ENCODE measurements at regions of chrX and their contacts with region 1.

Region 1: DNA sequence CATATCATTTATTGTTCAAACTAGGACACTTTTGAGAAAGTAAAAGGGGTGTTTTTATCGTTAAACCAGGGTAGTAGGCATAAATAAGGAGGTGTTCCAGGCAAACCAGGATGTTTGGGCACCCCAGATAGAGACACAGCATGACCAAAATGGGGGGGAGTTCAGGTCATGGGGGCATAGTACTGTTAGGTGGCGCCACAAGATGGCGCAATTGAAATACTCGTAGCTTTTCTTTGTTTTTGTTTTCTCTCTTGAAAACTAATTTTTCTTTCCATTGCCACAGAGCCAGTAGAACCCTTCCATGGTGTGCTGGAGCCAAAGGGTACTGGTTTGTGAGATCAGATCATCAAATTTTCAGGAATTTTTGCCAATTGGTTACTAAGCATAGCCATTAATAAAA is 283.4 kb downstream of the BCOR start:
- DNase-seq: no peak
- ATAC-seq: peak; percentile 53

Region 2: GRCh38 chrX:39396358-39396995 is 417.9 kb before region 1 on chrX:
- intact Hi-C with region 1: no loop called
- DNase-seq: no peak
- ATAC-seq: no peak

Region 3: GRCh38 chrX:39409246-39409917 is 405.0 kb before region 1 on chrX:
- intact Hi-C with region 1: no loop called
- DNase-seq: no peak
- ATAC-seq: no peak

Region 4: GRCh38 chrX:39730662-39731397 is 83.6 kb before region 1 on chrX:
- intact Hi-C with region 1: loop called (anchors 10 kb)
- DNase-seq: peak; percentile 73
- ATAC-seq: peak; percentile 86

Region 5: DNA sequence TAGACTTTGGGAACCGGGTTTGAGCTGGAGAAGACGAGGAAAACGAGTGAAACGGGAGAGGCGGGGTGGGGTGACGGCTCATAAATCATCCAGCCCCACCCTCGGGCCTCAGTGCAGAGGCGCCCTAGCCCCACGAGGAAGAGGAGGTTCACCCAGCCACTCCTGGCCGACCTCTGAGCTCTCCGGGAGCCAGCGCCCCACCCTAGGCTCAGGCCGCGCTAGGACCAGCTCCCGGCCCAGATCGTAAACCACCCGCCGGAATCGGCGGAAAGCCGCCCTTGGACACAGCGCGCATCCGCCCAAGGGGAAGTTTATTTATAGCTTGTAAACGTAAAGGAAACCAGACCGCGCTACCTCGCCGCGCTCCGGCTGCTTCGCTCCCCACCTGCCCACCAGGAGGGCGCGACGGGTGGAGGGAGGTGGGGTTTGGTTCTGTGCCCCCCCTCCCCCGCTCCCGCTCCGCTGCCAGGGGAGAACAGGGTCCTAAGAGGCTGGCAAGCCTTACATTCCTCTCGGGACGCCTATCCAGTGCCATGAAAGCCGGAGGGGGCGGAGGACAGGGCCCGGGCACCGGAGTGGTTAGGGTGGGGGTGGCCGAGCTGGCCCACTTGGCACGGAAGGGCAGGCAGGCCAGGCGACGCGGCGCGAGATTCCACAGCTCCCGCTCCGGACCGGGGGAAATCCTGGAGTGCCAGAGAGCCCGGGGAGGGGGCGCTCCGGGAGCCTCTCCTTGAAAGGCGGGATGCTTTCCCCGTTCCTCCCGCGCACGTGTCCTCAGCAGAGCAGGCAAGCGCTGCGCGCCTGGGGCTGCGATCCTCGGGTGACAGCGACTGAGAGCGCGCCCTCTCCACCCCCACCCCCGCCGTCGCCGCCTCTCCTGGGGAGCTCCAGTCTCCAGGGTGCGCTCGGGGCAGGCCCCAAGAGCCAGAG is 199.1 kb after region 1 on chrX:
- intact Hi-C with region 1: loop called (anchors 10 kb)
- DNase-seq: peak; percentile 81
- ATAC-seq: peak; percentile 64

Region 6: DNA sequence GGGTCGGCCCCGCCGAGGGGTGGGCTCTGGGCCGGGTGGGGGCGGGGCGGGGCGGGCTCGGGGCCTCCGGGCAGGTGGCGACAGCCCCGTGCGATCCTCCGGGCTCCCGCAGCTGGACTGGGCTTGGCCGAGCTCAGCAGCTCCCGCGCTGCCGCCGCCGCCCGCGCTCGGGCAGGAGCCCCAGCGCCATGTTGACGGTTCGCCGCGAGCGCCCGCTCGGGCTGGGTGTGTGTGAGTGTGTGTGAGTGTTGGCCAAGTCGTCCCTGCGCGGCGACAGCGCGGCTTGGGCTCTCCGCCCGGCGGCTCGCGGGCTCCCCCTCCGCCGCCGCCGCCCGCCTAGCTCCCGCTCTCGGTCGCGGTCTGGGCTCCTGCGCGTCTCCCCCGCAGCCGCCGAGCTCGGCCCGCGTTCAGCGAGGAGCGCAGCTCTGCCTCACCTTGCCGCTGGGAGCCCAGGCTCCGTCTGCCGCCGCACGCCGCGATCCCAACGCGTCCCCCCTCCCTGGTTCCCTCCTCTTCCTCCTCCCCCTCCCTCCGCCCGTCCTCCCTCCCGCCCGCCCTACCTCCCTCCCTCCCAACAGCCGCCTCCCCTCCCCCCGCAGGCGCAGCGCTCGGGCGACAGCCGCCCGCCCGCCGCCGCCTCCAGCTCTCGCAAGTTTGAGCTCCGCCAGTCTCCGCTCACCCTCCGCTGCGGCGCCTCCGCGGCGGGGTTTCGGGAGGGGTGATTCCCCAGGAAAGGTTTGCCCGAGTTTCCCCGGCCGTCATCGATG is 283.3 kb after region 1 on chrX and contains the start of gene BCOR:
- intact Hi-C with region 1: loop called (anchors 10 kb)
- DNase-seq: peak; percentile 79
- ATAC-seq: peak; percentile 65
- total RNA-seq, gene BCOR: 14.0 TPM

Region 7: GRCh38 chrX:40153335-40154249 is 339.2 kb after region 1 on chrX:
- intact Hi-C with region 1: loop called (anchors 10 kb)
- DNase-seq: peak; percentile 72
- ATAC-seq: peak; percentile 30

Region 8: DNA sequence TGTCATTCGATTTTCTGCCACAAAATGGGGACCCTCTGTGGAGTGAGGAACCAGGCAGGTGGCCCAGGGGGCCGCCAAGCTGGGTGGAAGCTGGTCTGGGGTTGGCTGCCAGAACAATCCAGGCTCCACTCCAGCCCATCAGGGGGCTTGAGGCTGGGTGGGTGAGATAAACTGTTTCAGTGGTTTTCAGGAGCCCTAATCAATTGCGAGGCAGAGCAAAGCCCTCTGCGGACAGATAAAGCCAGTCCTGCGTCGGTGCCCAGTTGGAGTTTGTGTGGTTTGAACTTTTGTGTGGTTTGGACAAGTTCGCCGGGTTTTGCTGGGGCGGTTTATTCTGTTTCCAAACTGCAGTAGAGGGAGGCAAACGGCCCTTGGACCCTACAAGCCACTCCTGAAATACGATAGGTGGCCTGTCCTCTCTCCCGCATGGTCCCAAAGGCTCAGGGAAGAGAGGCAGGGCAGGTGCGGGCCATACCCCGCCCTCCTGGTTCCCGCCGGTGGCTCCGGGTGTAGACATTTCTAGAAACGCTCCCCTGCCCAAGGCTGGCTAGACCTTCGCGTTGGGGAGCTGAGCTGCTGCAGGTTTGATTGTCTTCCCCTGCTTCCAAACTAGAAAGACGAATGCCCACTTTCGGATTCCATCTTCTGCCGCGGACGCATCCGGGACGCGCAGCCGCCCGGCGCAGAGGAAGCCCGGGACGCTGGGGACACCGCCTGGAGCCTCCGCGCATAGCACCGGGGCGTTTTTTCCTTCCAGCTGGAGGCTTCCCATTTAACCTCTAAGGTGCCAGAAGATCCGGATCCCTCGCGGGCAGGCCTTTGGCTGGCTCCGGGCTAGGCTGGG is 452.3 kb after region 1 on chrX:
- intact Hi-C with region 1: loop called (anchors 10 kb)
- DNase-seq: peak; percentile 80
- ATAC-seq: peak; percentile 95